HEK293T (cell line): ENCODE measurements at regions of chr14 and their contacts with region 1.

Region 1: DNA sequence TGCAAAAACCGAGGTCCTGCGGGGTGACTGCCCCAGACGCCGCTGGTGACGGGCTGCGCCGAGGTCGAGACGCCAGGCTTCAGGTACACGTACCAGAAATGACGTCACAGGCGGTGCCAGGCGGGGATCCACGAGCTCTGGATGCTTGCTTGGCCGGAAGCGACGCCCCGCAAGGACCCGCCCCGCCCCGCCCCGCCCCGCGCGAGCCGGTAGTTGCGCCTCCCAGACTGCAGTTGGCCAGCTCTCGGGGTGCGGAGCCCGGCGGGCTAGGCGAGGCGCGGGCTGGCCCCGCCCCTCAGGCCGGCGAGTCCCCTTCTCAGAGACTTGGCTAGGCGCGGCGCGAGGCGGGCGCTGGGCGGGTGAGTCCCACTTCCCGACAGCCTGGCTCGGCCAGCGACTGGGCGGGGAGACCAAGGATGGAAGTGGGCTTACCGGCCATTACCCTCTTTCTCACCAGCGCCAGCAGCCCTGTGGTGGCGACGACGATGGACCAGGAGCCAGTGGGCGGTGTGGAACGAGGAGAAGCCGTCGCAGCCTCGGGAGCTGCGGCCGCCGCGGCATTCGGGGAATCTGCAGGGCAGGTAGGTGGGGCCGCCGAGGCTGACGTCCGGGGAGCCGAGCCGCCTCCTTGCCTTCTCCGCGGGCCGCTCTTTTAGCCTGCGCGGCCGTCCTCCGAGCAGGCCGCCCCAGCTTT is at the start of gene FAM177A1:
- DNase-seq: peak; percentile 94

Region 2: DNA sequence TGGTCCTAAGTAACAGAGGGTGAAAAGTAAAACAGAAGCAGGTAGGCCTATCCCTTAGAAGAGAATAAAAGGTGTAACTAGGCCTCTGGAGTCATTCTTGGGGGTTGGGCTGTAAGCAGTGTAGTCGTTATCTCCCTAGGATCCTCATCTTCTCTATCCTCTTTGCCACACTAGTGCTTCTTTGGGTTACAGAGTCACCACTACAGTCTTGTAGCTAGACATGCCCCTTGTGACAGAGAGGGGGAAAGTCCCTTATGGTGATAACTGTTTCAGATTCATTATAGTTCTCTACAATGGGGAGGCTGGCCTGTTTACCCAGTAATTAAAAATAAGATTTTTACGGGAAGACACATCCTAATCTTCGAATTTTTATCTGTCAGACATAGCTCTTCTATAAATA is 79.8 kb before region 1 on chr14:
- CTCF ChIA-PET with region 1: no interaction called
- POLR2A ChIA-PET with region 1: no interaction called
- DNase-seq: no peak

Region 3: GRCh38 chr14:35032562-35032961 is 13.6 kb before region 1 on chr14:
- CTCF ChIA-PET with region 1: interaction called, 3 read pairs
- POLR2A ChIA-PET with region 1: interaction called, 12 read pairs
- DNase-seq: no peak

Region 4: DNA sequence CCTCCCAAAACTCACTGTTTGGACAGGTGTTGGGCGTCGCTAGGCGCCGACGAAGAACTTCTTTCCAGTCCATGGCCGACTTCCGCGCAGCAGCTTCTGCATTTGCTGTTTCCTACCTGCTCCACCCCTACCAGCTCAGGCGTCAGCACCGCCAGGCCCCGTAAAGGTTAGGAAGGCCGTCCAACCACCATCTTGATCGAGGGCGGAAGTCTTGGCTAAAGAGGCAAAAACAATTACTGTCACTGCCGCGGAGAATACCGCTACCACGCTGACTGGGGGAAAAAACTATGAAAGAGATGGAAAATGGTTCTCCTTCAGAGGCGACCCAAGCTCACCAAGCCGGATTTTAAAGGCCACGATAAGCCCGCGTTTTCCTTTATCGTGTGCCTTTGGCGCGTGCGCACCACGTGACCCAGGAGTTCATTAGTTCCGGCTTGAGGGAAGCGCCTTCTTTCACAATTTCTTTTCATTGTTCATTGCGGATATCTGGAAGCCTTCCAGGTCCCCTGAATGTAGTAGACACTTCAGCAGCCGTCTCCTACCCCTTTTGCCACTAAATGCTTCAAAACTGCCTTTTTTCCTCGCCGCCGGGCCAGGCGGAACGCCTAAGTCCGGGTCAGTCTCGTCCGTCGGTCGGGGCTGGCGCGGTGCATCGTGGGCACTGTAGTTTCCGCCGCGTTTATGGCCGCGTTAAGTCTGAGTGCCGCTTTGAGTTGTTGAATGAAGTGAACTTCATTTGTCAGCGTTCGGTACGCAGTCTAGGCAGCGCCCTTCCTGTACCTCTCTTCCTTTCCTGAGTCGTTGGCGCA is 75.9 kb after region 1 on chr14 and contains the starts of genes PPP2R3C and PRORP:
- CTCF ChIA-PET with region 1: interaction called, 3 read pairs
- POLR2A ChIA-PET with region 1: interaction called, 15 read pairs
- DNase-seq: peak; percentile 78